Heart left ventricle (tissue), 16 donors: ENCODE measurements at regions of chr2 and their contacts with region 1.

Region 1: GRCh38 chr2:197168705-197169104 is 141.9 kb downstream of the ANKRD44 start:
- DNase-seq: peak; percentile 36 to 68 (median 53)
- ATAC-seq: peak in 3 of 4 donors; percentile 61 to 83 (median 69)
- H3K4me3 ChIP-seq: no peak overlapping the region
- H3K27ac ChIP-seq: no peak overlapping the region
- H3K4me1 ChIP-seq: peaks cover 0 to 32% (median 4%) of the 10 kb centered on the region in 12 donors
- H3K27me3 ChIP-seq: no peaks in the 10 kb centered on the region
- CTCF ChIP-seq: peak; percentile 26 to 59 (median 43)
- POLR2A ChIP-seq: no peak

Region 2: GRCh38 chr2:196914867-196915460 is 253.7 kb before region 1 on chr2:
- intact Hi-C with region 1: no loop called
- DNase-seq: no peak
- ATAC-seq: no peak
- H3K4me3 ChIP-seq: no peak overlapping the region
- H3K27ac ChIP-seq: peak overlapping the region in 1 of 12 donors; percentile 51
- H3K4me1 ChIP-seq: peaks cover 0 to 9% (median 0%) of the 10 kb centered on the region in 12 donors
- H3K27me3 ChIP-seq: no peaks in the 10 kb centered on the region
- CTCF ChIP-seq: no peak
- POLR2A ChIP-seq: no peak

Region 3: DNA sequence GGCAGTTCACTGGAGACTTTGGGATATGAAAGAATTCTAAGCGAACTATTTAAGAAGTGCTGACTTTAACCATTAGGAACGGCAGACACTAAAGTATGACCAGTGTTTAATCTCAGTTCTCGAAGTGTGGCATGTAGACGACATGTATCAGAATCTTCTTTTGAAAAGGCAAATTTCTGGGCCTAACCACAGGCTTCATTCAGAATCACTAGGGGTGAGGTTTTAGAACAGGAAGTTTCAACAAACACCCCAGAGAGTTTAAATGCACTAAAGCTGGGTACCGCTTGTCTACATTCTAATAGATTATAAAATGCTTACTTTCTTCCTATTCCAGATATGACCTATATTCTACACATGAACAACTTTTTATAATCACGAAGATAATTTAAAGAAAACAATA is 38.4 kb before region 1 on chr2:
- intact Hi-C with region 1: loop called in 1 of 10 experiments (anchors 5 kb)
- DNase-seq: no peak
- ATAC-seq: no peak
- H3K4me3 ChIP-seq: no peak overlapping the region
- H3K27ac ChIP-seq: peak overlapping the region in 1 of 12 donors; percentile 28
- H3K4me1 ChIP-seq: peaks cover 0 to 19% (median 2%) of the 10 kb centered on the region in 12 donors
- H3K27me3 ChIP-seq: no peaks in the 10 kb centered on the region
- CTCF ChIP-seq: no peak
- POLR2A ChIP-seq: no peak

Region 4: DNA sequence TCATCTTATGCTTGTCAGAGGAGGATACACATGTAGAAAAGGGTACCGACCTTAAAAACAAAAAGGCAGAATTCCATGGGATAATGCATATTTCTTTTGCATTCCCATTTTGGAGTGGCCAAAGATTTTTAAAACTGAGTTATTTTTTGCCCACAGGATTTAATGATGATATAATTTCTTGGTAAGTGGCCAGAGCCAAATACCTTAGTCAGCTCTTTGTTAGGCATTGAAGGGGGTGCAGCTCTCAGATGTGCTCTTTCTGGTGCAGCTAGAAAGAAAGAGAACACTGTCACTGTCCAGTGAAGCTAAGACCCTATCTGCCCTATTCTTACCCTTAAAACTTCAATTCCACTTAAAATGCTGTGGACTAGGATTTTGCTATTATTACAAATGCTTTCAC is 295.5 kb after region 1 on chr2:
- intact Hi-C with region 1: no loop called
- DNase-seq: no peak
- ATAC-seq: no peak
- H3K4me3 ChIP-seq: no peak overlapping the region
- H3K27ac ChIP-seq: no peak overlapping the region
- H3K4me1 ChIP-seq: peaks cover 0 to 28% (median 12%) of the 10 kb centered on the region in 12 donors
- H3K27me3 ChIP-seq: no peaks in the 10 kb centered on the region
- CTCF ChIP-seq: no peak
- POLR2A ChIP-seq: no peak

Region 5: GRCh38 chr2:197606180-197606579 is 437.5 kb after region 1 on chr2:
- intact Hi-C with region 1: no loop called
- DNase-seq: no peak
- ATAC-seq: no peak
- H3K4me3 ChIP-seq: no peak overlapping the region
- H3K27ac ChIP-seq: no peak overlapping the region
- H3K4me1 ChIP-seq: no peaks in the 10 kb centered on the region
- H3K27me3 ChIP-seq: no peaks in the 10 kb centered on the region
- CTCF ChIP-seq: no peak
- POLR2A ChIP-seq: no peak